Right cardiac atrium (tissue), 5 donors: ENCODE measurements at regions of chr2 and their contacts with region 1.

Region 1: GRCh38 chr2:182763311-182763912 is 47.4 kb downstream of the DNAJC10 start:
- DNase-seq: no peak
- ATAC-seq: no peak
- H3K4me3 ChIP-seq: no peak overlapping the region
- H3K27ac ChIP-seq: no peak overlapping the region
- H3K4me1 ChIP-seq: peaks cover 5% of the 10 kb centered on the region
- H3K27me3 ChIP-seq: no peaks in the 10 kb centered on the region

Region 2: GRCh38 chr2:182447863-182448262 is 315.5 kb before region 1 on chr2:
- intact Hi-C with region 1: no loop called
- DNase-seq: no peak
- ATAC-seq: peak; percentile 82 to 84
- H3K4me3 ChIP-seq: no peak overlapping the region
- H3K27ac ChIP-seq: no peak overlapping the region
- H3K4me1 ChIP-seq: no peaks in the 10 kb centered on the region
- H3K27me3 ChIP-seq: no peaks in the 10 kb centered on the region

Region 3: GRCh38 chr2:182980115-182980514 is 216.7 kb after region 1 on chr2:
- intact Hi-C with region 1: loop called (anchors 5 to 10 kb)
- DNase-seq: no peak
- ATAC-seq: no peak
- H3K4me3 ChIP-seq: no peak overlapping the region
- H3K27ac ChIP-seq: no peak overlapping the region
- H3K4me1 ChIP-seq: no peaks in the 10 kb centered on the region
- H3K27me3 ChIP-seq: no peaks in the 10 kb centered on the region